Activated CD4-positive, alpha-beta T cell treated with anti-CD3 and anti-CD28 coated beads for 36 hours (primary cell): ENCODE measurements at regions of chr7 and their contacts with region 1.

Region 1: DNA sequence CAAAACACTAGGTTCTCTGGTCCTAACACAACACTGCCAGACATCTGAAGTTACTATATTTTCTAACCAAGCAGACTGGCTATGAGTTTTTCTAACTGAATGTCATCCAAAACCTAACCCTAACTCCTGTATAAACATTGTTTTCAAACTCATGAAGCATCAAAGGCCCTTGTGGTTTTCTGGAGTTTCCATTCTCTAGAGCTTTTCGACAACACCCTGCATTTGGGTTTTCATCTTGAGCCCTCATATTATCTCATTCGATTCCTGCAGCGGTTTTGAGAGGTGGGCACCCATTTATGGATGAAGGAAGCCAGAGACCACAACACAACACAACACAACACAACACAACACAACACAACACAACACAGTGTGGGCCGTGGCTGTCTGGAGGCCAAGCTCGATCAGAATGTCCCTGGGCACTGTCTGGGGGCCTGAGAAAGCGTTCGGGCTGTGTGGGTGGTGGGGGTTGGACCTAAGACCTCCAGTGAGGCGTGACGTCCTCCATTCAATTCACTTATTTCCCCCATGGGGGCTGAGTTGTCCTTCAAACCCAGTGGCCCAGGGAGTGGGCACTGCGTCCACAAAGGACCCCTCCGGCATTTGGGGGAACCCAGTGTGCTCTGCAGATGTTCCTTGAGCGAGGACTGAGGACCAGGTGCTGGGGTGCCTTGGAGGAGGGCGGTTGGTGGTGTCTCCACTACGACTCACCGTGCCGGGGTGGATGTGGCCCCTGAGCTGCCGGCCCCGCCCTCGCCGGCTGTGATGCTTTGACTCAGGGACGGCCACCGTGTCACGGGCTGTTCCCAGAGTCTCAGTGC is 490.4 kb downstream of the DNAJB6 start:
- DNase-seq: peak; percentile 68
- ATAC-seq: peak; percentile 55
- H3K4me3 Mint-ChIP-seq: no peak overlapping the region
- H3K27ac Mint-ChIP-seq: peak overlapping the region; percentile 23
- H3K4me1 Mint-ChIP-seq: peaks cover 36% of the 10 kb centered on the region
- H3K27me3 Mint-ChIP-seq: no peaks in the 10 kb centered on the region

Region 2: DNA sequence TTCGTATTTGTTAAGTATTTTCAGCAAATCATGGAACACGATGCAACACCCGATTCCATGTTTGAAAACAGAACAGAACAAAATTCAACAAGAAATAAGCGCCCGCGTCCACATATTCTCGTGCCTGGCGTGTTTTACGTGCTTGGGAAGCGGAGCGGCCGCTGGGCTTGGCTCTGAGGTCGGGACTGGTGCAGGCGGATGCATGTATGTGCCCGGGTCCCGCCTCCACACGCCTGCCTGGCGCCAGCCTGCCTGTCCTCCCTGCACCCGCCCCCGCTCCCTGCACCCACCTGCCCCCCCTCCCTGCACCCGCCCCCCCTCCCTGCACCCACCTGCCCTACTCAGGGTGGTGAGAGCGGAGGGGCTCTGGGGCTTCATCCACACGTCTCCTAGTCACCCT is 36.0 kb before region 1 on chr7:
- CTCF ChIA-PET with region 1: no interaction called
- POLR2A ChIA-PET with region 1: no interaction called
- intact Hi-C with region 1: no loop called
- DNase-seq: no peak
- ATAC-seq: no peak
- H3K4me3 Mint-ChIP-seq: no peak overlapping the region
- H3K27ac Mint-ChIP-seq: no peak overlapping the region
- H3K4me1 Mint-ChIP-seq: no peaks in the 10 kb centered on the region
- H3K27me3 Mint-ChIP-seq: no peaks in the 10 kb centered on the region

Region 3: GRCh38 chr7:157851501-157852067 is 24.3 kb after region 1 on chr7:
- CTCF ChIA-PET with region 1: no interaction called
- POLR2A ChIA-PET with region 1: no interaction called
- intact Hi-C with region 1: loop called in 1 of 2 experiments (anchors 1 kb)
- DNase-seq: peak; percentile 93
- ATAC-seq: peak; percentile 99
- H3K4me3 Mint-ChIP-seq: peak overlapping the region; percentile 47
- H3K27ac Mint-ChIP-seq: peak overlapping the region; percentile 84
- H3K4me1 Mint-ChIP-seq: peaks cover 14% of the 10 kb centered on the region
- H3K27me3 Mint-ChIP-seq: no peaks in the 10 kb centered on the region

Region 4: GRCh38 chr7:157875230-157876179 is 48.3 kb after region 1 on chr7:
- CTCF ChIA-PET with region 1: no interaction called
- POLR2A ChIA-PET with region 1: no interaction called
- intact Hi-C with region 1: loop called (anchors 2 to 5 kb)
- DNase-seq: peak; percentile 76
- ATAC-seq: peak; percentile 83
- H3K4me3 Mint-ChIP-seq: peak overlapping the region; percentile 57
- H3K27ac Mint-ChIP-seq: peak overlapping the region; percentile 2
- H3K4me1 Mint-ChIP-seq: peaks cover 29% of the 10 kb centered on the region
- H3K27me3 Mint-ChIP-seq: peaks cover 2% of the 10 kb centered on the region

Region 5: DNA sequence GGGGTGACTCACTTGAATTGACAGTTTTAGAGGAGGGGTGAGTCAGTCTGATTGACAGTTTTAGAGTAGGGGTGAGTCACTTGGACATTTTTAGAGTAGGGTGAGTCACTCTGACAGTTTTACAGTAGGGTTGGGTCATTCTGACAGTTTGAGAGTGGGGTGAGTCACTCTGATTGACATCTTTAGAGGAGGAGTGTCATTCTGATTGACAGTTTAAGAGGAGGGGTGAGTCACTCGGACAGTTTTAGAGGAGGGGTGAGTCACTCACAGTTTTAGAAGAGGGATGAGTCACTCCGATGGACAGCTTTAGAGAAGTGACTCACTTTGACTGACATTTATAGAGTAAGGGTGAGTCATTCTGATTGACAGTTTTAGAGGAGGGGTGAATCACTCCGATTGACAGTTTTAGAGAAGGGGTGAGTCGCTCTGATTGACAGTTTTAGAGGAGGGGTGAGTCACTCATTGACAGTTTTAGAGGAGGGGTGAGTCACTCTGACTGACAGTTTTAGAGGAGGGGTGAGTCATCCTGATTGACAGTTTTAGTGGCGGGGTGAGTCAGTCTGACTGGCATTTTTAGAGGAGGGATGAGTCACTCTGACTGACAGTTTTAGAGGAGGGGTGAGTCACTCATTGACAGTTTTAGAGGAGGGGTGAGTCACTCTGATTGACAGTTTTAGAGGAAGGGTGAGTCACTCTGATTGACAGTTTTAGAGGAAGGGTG is 105.4 kb after region 1 on chr7:
- CTCF ChIA-PET with region 1: no interaction called
- POLR2A ChIA-PET with region 1: no interaction called
- intact Hi-C with region 1: loop called in 1 of 2 experiments (anchors 2 kb)
- DNase-seq: peak; percentile 43
- ATAC-seq: peak; percentile 77
- H3K4me3 Mint-ChIP-seq: peak overlapping the region; percentile 54
- H3K27ac Mint-ChIP-seq: peak overlapping the region; percentile 94
- H3K4me1 Mint-ChIP-seq: no peaks in the 10 kb centered on the region
- H3K27me3 Mint-ChIP-seq: peaks cover 2% of the 10 kb centered on the region